ENCODE measurements at regions of chr6 and their contacts with region 1.

Region 1: GRCh38 chr6:25006565-25007001 is 70.8 kb upstream of the RIPOR2 start:
- DNase-seq: peak; percentile 55
- H3K4me3 Mint-ChIP-seq: peak overlapping the region; percentile 9
- H3K27ac Mint-ChIP-seq: peak overlapping the region; percentile 87
- H3K4me1 Mint-ChIP-seq: peaks cover 82% of the 10 kb centered on the region
- H3K27me3 Mint-ChIP-seq: no peaks in the 10 kb centered on the region

Region 2: GRCh38 chr6:24883618-24884017 is 123.0 kb before region 1 on chr6:
- intact Hi-C with region 1: loop called (anchors 1 kb)
- DNase-seq: no peak
- H3K4me3 Mint-ChIP-seq: peak overlapping the region; percentile 66
- H3K27ac Mint-ChIP-seq: peak overlapping the region; percentile 91
- H3K4me1 Mint-ChIP-seq: peaks cover 79% of the 10 kb centered on the region
- H3K27me3 Mint-ChIP-seq: no peaks in the 10 kb centered on the region

Region 3: DNA sequence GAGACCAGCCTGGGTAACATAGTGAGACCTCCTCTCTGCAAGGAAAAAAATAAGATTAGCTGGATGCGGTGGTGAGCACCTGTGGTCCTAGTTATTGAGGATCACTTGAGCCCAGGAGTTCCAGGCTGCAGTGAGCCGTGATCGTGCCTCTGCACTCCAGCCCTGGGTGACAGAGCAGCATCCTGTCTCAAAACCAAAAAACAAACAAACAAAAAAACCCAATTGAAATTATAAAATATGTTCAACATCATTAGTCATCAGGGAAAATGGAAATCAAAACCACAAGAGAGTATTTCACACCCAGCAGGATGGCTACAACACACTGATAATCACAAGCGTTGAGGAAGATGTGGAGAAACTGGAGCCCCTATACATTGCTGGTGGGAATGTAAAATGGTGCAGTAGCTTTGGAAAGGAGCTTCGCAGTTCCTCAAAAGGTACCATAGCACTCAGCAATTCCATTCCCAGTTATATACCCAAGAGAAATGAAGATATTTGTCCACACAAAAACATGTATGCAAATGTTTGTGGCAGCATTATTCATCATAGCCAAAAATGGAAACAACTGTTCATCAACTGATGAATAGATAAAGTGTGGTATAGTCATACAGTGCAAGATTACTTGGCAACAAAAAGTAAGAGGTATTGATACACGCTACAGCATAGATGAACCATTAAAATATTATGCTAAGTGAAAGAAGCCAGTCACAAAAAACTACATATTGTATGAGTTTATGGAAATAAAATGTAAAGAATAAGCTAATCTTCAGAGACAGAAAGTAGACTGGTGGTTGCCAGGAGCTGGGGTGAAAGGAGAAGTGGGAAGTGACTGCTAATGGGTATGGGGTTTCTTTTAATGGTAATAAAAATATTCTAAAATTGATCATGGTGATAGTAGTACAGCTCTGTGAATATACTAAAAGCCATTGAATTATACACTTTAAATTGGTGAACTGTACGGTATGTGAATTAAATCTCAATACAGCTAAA is 32.1 kb before region 1 on chr6:
- intact Hi-C with region 1: loop called (anchors 1 kb)
- DNase-seq: no peak
- H3K4me3 Mint-ChIP-seq: peak overlapping the region; percentile 34
- H3K27ac Mint-ChIP-seq: peak overlapping the region; percentile 86
- H3K4me1 Mint-ChIP-seq: peaks cover 52% of the 10 kb centered on the region
- H3K27me3 Mint-ChIP-seq: no peaks in the 10 kb centered on the region

Region 4: DNA sequence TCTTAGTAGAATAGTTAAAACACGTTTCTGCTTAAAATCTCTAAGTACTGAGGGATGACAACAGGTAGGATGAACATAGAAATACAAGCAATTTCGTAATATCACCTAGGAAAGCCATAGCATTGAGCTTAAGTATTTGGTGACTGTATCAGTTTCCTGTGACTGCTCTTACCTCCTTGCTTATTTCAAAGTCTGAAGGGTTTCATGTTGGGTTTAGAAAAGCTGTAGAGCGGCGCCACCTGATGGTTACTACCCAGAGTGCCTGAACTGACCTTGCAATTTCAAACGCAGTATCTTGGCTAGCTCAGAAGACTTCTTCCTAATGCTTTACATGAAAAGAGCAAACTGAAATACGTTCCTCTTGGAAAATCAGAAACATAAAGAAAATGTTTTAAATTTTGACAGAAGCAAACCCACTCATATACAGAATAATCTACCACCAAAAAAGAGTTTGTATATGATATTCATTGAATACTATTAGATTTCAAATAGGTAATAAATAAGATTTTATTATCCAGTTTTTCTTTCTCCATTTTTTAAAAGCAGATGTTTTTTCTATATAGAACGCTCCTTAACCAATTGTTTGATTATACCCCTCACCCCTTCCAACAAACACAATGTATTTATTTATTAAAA is 11.5 kb after region 1 on chr6:
- intact Hi-C with region 1: loop called (anchors 1 kb)
- DNase-seq: peak; percentile 70
- H3K4me3 Mint-ChIP-seq: no peak overlapping the region
- H3K27ac Mint-ChIP-seq: no peak overlapping the region
- H3K4me1 Mint-ChIP-seq: peaks cover 50% of the 10 kb centered on the region
- H3K27me3 Mint-ChIP-seq: no peaks in the 10 kb centered on the region